Caco-2 (cell line): ENCODE measurements at regions of chr4 and their contacts with region 1.

Region 1: DNA sequence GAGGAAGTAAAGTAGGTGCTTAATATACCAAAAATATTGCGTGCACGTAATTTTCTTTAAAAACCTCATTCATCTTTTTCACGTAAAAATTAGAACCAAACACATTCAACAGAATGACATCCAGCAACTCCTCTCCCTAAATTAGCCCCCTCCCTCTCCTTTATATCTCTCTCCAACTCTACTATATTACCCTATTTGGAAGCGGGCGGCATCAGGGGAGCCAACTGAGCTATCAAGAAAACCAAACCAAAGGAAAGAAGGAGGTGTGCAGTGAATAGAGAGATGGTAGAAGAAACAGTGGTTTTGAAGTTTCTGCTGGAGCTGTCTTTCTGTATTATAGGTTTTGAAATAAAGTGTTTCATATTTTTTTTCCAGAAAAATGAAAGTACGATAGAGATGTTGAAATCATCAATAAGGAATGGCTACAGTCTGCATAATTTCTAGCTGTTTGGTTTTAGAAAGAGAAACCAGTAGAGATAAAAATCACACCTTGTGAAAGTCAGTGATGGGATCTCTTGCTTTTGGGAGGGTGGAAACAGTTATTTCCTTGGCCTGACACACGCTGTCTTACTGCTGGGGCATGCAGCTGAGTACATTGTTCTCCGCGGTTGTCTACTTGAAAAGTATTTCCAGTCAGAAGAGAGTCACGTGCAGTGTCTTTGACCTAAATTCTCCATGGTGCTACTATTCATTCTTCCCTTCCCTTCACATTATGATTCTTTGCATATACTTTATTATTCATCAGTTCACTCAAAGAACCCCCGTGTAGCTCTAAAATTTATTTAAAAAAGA is 94.1 kb upstream of the WDR17 start:
- DNase-seq: no peak
- H3K4me3 ChIP-seq: no peak overlapping the region
- H3K4me3 Mint-ChIP-seq: no peak overlapping the region
- H3K27ac Mint-ChIP-seq: no peak overlapping the region
- H3K4me1 ChIP-seq: no peaks in the 10 kb centered on the region
- H3K4me1 Mint-ChIP-seq: no peaks in the 10 kb centered on the region
- H3K27me3 ChIP-seq: no peaks in the 10 kb centered on the region
- H3K27me3 Mint-ChIP-seq: peaks cover 3% of the 10 kb centered on the region
- CTCF ChIP-seq: no peak

Region 2: GRCh38 chr4:175139205-175139604 is 832.4 kb before region 1 on chr4:
- CTCF ChIA-PET with region 1: no interaction called
- POLR2A ChIA-PET with region 1: no interaction called
- intact Hi-C with region 1: loop called (anchors 10 kb)
- DNase-seq: no peak
- H3K4me3 ChIP-seq: no peak overlapping the region
- H3K4me3 Mint-ChIP-seq: no peak overlapping the region
- H3K27ac Mint-ChIP-seq: no peak overlapping the region
- H3K4me1 ChIP-seq: no peaks in the 10 kb centered on the region
- H3K4me1 Mint-ChIP-seq: no peaks in the 10 kb centered on the region
- H3K27me3 ChIP-seq: no peaks in the 10 kb centered on the region
- H3K27me3 Mint-ChIP-seq: no peaks in the 10 kb centered on the region
- CTCF ChIP-seq: no peak